Transverse colon (tissue), 4 donors: ENCODE measurements at regions of chr10 and their contacts with region 1.

Region 1: GRCh38 chr10:84715911-84716310 is 387.5 kb downstream of the CCSER2 start:
- DNase-seq: peak; percentile 23
- H3K4me3 ChIP-seq: no peak overlapping the region
- H3K27ac ChIP-seq: no peak overlapping the region
- H3K4me1 ChIP-seq: no peaks in the 10 kb centered on the region
- H3K27me3 ChIP-seq: no peaks in the 10 kb centered on the region
- CTCF ChIP-seq: peak in 4 of 5 experiments; percentile 31 to 45 (median 38)
- EP300 ChIP-seq: no peak
- POLR2A ChIP-seq: no peak

Region 2: GRCh38 chr10:84654671-84655070 is 61.2 kb before region 1 on chr10:
- in situ Hi-C with region 1: no loop called
- intact Hi-C with region 1: no loop called
- DNase-seq: no peak
- H3K4me3 ChIP-seq: no peak overlapping the region
- H3K27ac ChIP-seq: no peak overlapping the region
- H3K4me1 ChIP-seq: no peaks in the 10 kb centered on the region
- H3K27me3 ChIP-seq: no peaks in the 10 kb centered on the region
- CTCF ChIP-seq: no peak
- EP300 ChIP-seq: no peak
- POLR2A ChIP-seq: no peak

Region 3: DNA sequence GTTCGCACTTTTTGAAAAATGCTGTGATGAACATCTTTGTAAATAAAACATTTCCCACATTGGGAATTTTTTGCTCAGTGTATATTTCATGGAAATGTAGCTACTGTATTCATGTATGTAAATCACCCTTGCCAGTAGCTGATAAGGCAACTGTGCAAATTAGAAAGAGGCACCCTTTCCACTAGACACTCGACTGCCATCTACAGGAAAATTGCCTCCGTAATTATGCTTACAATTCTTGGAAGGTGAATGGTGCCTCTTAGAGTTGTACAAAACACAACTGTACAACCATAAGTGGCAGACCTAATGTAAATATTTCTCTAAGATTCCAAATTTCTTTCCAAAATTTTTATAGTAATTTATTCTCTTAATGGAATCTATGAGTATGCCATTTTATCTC is 104.2 kb after region 1 on chr10:
- in situ Hi-C with region 1: loop called in 1 of 4 experiments (anchors 25 kb)
- intact Hi-C with region 1: no loop called
- DNase-seq: no peak
- H3K4me3 ChIP-seq: no peak overlapping the region
- H3K27ac ChIP-seq: no peak overlapping the region
- H3K4me1 ChIP-seq: no peaks in the 10 kb centered on the region
- H3K27me3 ChIP-seq: no peaks in the 10 kb centered on the region
- CTCF ChIP-seq: peak in 2 of 5 experiments; percentile 19 to 31
- EP300 ChIP-seq: no peak
- POLR2A ChIP-seq: no peak

Region 4: GRCh38 chr10:85666102-85666501 is 950.2 kb after region 1 on chr10:
- in situ Hi-C with region 1: no loop called
- intact Hi-C with region 1: no loop called
- DNase-seq: no peak
- H3K4me3 ChIP-seq: no peak overlapping the region
- H3K27ac ChIP-seq: no peak overlapping the region
- H3K4me1 ChIP-seq: no peaks in the 10 kb centered on the region
- H3K27me3 ChIP-seq: no peaks in the 10 kb centered on the region
- CTCF ChIP-seq: no peak
- EP300 ChIP-seq: no peak
- POLR2A ChIP-seq: no peak